ENCODE measurements at regions of chr5 and their contacts with region 1.

Region 1: DNA sequence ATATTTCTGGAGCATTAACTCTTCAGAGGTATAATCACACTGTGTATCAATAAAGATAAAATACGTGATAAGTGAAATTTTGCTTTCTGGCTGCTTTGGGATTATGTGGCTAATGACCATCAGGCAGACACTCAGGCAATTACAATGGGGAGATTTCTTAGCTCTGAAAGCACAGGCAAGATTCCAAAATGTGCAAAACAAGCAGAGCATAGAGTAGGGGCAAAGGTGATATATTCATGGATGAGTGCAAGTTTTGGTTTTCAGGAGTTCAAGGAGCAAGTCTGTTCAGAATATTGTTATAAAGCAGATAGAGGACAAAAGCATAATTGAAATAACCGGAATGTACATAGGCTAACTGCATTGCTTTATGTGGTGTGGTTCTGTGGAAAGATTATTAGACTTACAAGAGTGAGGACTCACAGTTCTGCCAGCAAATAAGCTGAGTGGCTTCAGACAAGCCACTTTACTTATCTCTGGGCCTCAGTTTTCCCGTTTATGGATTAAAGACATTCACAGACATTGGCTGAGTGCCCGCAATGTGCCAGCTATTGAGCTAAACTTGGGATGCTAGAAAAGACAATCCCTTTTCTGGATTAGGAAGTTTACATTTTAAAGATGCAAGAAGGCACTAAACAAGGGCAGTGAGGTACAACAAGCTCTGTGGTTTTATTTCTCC is 945.6 kb upstream of the ARRDC3 start:
- DNase-seq: no peak
- H3K4me3 ChIP-seq: no peak overlapping the region
- H3K27ac ChIP-seq: no peak overlapping the region
- H3K4me1 ChIP-seq: no peaks in the 10 kb centered on the region
- H3K27me3 ChIP-seq: no peaks in the 10 kb centered on the region
- CTCF ChIP-seq: no peak
- EP300 ChIP-seq: no peak
- POLR2A ChIP-seq: no peak

Region 2: DNA sequence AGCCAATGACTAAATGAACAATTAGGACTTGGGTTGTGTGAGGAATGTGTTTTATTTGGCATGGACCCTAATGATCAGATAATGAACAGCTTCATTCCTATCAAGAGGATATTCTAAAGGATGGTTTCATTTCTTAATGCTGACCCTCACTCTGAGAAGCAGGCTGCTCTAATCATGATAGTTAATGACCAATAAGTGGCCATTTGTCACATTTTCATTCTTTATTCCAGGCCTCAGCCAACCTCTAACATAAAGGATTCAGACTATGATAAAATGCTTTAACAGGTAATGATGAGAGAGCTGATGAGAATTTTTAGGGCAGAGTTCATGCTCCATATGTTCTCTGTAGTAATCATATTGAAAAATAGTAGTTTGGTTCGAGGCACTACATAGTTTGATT is 644.1 kb before region 1 on chr5:
- intact Hi-C with region 1: loop called in 1 of 4 experiments (anchors 5 kb)
- DNase-seq: no peak
- H3K4me3 ChIP-seq: no peak overlapping the region
- H3K27ac ChIP-seq: no peak overlapping the region
- H3K4me1 ChIP-seq: no peaks in the 10 kb centered on the region
- H3K27me3 ChIP-seq: no peaks in the 10 kb centered on the region
- CTCF ChIP-seq: no peak
- EP300 ChIP-seq: no peak
- POLR2A ChIP-seq: no peak

Measured in ovary (tissue), 10 donors.